Dorsolateral prefrontal cortex (tissue), 120 donors: ENCODE measurements at regions of chr1 and their contacts with region 1.

Region 1: DNA sequence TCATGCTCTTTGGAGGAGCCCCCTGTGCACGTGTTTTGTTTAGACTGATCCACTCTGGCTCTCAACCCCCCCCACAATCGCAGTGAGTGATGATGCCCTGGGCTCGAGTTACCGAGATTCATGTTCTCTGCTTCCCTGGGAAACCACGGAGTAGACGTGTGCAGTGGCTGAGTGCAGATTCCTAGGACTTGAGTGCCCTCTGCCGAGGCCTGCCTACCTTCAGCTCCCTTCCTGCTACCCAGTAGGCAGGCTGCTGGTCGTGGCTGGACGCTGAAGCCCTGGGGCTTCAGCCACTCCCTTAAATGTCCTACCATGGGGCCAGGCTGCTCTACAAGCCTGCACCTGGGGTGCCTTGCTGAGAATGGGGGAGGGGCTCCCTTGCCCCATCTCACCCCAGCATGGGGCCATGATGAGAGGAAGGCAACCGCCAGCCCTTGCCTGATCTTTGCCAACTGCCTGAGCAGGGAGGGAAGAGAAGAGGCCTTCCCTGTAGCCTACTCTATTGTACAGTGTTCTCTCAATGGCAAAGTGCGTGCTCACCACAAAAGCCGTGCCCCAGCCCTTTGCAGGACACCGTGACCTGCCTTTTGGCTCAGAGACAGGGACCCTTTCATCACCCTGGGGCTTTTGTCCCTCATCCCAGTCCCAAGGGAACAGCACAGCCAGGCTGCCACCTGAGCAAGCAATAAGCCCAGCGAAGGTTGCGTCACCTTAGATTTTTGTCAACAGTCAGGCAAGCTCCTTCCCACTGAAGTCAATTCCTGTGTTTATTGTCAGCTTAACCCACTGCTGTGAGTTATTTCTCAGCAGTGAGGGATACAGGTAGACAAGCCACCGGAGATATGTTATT is 4.1 kb upstream of the GRIK3 start:
- DNase-seq: peak; percentile 29 to 83 (median 80)
- H3K4me3 ChIP-seq: peak overlapping the region in 25 of 59 donors; percentile 2 to 44 (median 26)
- H3K27ac ChIP-seq: peak overlapping the region in 20 of 59 donors; percentile 2 to 81 (median 30)
- H3K27me3 ChIP-seq: peaks cover 0 to 54% (median 19%) of the 10 kb centered on the region in 45 donors
- CTCF ChIP-seq: peak in 54 of 56 donors; percentile 39 to 76 (median 62)

Region 2: GRCh38 chr1:36511804-36512798 is 526.4 kb before region 1 on chr1:
- intact Hi-C with region 1: loop called in 1 of 2 experiments (anchors 5 kb)
- DNase-seq: no peak
- H3K4me3 ChIP-seq: no peak overlapping the region
- H3K27ac ChIP-seq: no peak overlapping the region
- H3K27me3 ChIP-seq: peaks cover 0 to 17% (median 0%) of the 10 kb centered on the region in 45 donors
- CTCF ChIP-seq: no peak

Region 3: DNA sequence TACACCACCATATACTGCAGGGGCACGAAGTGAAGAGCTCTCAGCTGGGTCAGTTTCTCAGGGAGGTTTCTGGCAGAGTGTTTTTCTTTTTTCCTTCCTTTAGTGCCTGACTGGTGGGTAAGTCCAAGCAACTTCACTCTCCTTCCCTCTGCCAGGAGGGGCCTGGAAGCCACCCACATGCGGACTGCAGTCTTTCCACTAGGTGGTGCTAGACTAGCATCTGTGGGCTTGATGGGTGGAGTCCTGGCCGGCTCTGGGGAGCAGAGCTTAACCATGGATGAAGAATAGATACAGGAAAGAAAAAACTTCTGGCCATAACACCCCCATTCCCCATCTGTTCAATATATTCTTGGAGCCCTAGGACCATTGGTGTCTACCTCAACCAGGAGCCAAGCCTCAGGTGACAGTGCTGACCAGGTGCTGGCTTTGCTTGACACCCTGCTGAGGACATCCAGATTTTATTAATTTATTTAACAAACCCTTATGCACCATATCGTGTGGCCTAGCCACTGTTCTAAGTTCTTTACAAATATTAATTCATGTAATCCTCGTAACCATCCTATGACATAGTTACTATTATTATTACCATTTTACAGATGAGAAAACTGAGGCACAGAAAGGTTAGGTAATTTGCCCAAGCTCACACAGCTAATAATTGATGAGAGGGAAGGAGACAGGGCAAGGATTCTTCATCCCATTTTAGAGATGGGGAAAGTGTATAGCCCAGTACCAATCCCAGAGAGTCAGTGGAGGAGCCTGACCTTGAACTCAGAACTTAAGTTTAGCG is 429.0 kb before region 1 on chr1:
- intact Hi-C with region 1: loop called (anchors 10 kb)
- DNase-seq: peak; percentile 28 to 81 (median 72)
- H3K4me3 ChIP-seq: no peak overlapping the region
- H3K27ac ChIP-seq: no peak overlapping the region
- H3K27me3 ChIP-seq: peaks cover 0 to 4% (median 0%) of the 10 kb centered on the region in 45 donors
- CTCF ChIP-seq: peak; percentile 53 to 94 (median 84)

Region 4: GRCh38 chr1:36703526-36704208 is 334.8 kb before region 1 on chr1:
- intact Hi-C with region 1: loop called (anchors 2 kb)
- DNase-seq: peak; percentile 59 to 89 (median 84)
- H3K4me3 ChIP-seq: no peak overlapping the region
- H3K27ac ChIP-seq: peak overlapping the region in 53 of 59 donors; percentile 2 to 84 (median 66)
- H3K27me3 ChIP-seq: peaks cover 0 to 10% (median 0%) of the 10 kb centered on the region in 45 donors
- CTCF ChIP-seq: peak; percentile 74 to 99 (median 95)

Region 5: GRCh38 chr1:37323486-37324377 is 285.3 kb after region 1 on chr1:
- intact Hi-C with region 1: loop called in 1 of 2 experiments (anchors 10 kb)
- DNase-seq: no peak
- H3K4me3 ChIP-seq: no peak overlapping the region
- H3K27ac ChIP-seq: no peak overlapping the region
- H3K27me3 ChIP-seq: peaks cover 0 to 11% (median 0%) of the 10 kb centered on the region in 45 donors
- CTCF ChIP-seq: peak in 51 of 56 donors; percentile 15 to 60 (median 44)